ENCODE measurements at regions of chr11 and their contacts with region 1.

Region 1: DNA sequence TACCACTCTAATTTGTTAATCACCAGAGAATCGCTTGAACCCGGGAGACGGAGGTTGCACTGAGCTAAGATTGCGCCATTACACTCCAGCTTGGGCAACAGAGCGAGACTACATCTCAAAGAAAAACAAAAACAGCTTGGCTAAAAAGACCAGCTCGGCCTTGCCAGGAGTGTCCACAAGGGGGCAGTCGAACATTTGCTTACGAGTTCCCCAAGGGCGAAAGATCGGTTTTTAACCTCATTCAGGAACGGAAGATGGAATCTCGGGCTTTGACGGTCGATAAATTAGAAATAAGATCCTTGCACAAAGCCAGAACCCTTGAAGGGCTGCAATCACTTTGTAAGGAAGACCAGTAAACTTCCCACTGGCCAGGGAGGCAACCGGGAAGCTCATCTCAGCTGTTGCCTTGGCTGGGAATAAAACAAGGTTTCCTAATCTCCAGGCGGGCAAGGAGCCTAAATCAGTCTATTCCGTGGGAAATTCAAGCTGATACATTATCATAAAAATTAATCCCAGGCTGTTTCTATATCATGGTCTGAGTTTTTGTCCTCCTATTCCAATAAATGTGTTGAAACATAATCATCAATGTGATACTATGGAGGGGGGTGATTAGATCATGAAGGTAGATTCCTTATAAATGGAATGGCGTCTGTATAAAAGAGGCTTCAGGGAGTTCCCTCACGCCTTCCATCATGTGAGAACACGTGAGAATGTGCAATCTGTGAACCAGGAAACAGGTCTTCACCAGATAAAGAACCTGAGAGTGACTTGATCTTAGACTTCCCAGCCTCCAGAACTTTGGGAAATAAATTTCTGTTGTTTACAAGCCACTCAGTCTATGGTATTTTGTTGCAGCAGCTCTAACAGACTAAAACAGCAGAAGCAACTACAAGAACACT is 14.9 kb upstream of the SLC29A2 start:
- DNase-seq: peak; percentile 92
- ATAC-seq: peak; percentile 80
- H3K4me3 Mint-ChIP-seq: peak overlapping the region; percentile 47
- H3K27ac Mint-ChIP-seq: peak overlapping the region; percentile 15
- H3K4me1 Mint-ChIP-seq: peaks cover 7% of the 10 kb centered on the region
- H3K27me3 Mint-ChIP-seq: no peaks in the 10 kb centered on the region

Region 2: DNA sequence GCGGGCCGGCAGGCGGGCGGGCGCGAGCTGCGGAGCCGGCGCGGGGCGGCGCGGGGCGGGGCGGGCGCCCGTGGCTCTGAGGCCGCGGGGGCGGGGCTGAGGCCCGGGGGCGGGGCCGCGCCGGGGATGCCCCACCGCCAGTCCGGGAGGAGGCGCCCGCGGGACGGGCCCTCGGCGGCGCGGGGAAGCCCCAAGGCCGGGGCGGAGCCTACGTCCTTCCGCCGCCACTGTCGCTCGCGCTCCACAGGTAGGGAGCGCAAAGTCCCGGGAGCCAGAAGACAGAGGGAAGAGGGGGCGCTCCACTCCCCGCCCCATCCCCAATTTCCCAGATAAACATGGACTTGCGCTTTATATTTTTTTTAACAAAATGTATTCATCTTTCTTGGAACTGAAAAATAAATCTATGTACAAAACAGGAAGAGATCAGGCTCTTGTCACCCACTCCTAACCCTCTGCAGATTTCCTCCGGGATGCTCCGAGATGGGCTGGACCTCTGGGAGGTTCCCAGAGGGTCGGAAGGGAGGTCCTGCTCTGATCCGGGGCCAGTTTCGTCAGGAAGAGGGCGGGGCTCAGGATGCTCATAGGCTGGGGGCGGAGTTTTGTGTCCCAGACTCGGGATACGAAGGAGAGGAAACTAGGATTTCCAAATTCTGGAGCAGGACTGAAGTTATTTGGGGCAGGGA is 1583.1 kb before region 1 on chr11 and contains the start of gene MAP4K2:
- CTCF ChIA-PET with region 1: no interaction called
- POLR2A ChIA-PET with region 1: no interaction called
- intact Hi-C with region 1: no loop called
- DNase-seq: peak; percentile 92
- ATAC-seq: peak; percentile 93
- H3K4me3 Mint-ChIP-seq: peak within 1 kb of the TSS; percentile 75
- H3K27ac Mint-ChIP-seq: peak within 1 kb of the TSS; percentile 90
- H3K4me1 Mint-ChIP-seq: peaks cover 27% of the 10 kb centered on the region
- H3K27me3 Mint-ChIP-seq: no peaks in the 10 kb centered on the region
- total RNA-seq, gene MAP4K2: 54.0 to 57.3 TPM

Region 3: DNA sequence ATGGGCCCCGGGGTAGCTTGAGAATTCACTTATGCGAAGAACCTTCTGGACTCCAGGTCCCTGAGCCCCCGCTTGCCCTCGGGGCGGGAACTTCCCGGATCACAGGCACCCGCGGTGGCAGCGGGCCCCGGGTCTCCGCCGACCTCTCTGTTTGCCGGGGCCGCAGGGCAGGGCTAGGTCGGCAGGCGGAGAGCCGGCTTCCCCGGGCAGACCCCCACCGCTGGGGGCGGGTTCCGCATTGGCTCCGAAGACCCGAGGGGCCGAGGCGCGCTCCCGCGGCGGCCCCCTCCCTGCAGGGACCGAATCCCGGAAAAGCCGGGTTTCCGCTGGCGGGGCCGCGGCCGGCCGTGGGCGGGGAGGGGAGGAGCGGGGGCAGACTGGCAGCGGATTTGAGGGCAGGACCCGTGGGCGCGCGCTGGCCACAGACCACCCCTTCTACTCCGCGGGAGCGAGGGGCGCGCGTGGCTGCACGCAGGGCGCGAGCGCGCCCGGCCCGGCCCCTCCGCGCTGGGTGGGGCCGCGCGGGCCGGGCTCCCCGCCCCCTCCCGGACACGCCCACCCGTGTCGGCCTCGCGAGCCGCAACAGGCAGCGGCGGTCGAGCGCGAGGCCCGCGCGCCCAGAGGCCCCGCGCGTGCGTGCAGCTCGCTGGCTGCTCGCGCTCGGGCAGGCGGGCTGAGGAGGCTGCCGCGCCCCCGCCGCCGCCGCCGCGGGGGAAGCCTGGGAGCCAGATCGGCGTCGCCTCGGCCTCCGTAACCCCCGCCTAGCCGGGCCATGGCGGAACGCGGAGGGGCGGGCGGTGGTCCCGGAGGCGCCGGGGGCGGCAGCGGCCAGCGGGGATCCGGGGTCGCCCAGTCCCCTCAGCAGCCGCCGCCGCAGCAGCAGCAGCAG is 316.5 kb before region 1 on chr11 and contains the start of gene PACS1:
- CTCF ChIA-PET with region 1: no interaction called
- POLR2A ChIA-PET with region 1: no interaction called
- intact Hi-C with region 1: no loop called
- DNase-seq: peak; percentile 83
- ATAC-seq: peak; percentile 48
- H3K4me3 Mint-ChIP-seq: peak within 1 kb of the TSS; percentile 98
- H3K27ac Mint-ChIP-seq: peak within 1 kb of the TSS; percentile 99
- H3K4me1 Mint-ChIP-seq: peaks cover 66% of the 10 kb centered on the region
- H3K27me3 Mint-ChIP-seq: no peaks in the 10 kb centered on the region
- total RNA-seq, gene PACS1: 76.6 to 90.7 TPM

Region 4: GRCh38 chr11:66344550-66345315 is 41.7 kb before region 1 on chr11 and contains the start of gene BRMS1:
- CTCF ChIA-PET with region 1: interaction called, 14 read pairs
- POLR2A ChIA-PET with region 1: no interaction called
- intact Hi-C with region 1: no loop called
- DNase-seq: peak; percentile 98
- ATAC-seq: peak; percentile 80
- H3K4me3 Mint-ChIP-seq: peak within 1 kb of the TSS; percentile 93
- H3K27ac Mint-ChIP-seq: peak within 1 kb of the TSS; percentile 90
- H3K4me1 Mint-ChIP-seq: peaks cover 45% of the 10 kb centered on the region
- H3K27me3 Mint-ChIP-seq: peaks cover 3% of the 10 kb centered on the region
- total RNA-seq, gene BRMS1: 29.2 to 30.2 TPM

Region 5: GRCh38 chr11:66363805-66364535 is 22.4 kb before region 1 on chr11:
- CTCF ChIA-PET with region 1: interaction called, 19 read pairs
- POLR2A ChIA-PET with region 1: no interaction called
- intact Hi-C with region 1: no loop called
- DNase-seq: peak; percentile 88
- ATAC-seq: peak; percentile 82
- H3K4me3 Mint-ChIP-seq: no peak overlapping the region
- H3K27ac Mint-ChIP-seq: no peak overlapping the region
- H3K4me1 Mint-ChIP-seq: no peaks in the 10 kb centered on the region
- H3K27me3 Mint-ChIP-seq: no peaks in the 10 kb centered on the region

Region 6: DNA sequence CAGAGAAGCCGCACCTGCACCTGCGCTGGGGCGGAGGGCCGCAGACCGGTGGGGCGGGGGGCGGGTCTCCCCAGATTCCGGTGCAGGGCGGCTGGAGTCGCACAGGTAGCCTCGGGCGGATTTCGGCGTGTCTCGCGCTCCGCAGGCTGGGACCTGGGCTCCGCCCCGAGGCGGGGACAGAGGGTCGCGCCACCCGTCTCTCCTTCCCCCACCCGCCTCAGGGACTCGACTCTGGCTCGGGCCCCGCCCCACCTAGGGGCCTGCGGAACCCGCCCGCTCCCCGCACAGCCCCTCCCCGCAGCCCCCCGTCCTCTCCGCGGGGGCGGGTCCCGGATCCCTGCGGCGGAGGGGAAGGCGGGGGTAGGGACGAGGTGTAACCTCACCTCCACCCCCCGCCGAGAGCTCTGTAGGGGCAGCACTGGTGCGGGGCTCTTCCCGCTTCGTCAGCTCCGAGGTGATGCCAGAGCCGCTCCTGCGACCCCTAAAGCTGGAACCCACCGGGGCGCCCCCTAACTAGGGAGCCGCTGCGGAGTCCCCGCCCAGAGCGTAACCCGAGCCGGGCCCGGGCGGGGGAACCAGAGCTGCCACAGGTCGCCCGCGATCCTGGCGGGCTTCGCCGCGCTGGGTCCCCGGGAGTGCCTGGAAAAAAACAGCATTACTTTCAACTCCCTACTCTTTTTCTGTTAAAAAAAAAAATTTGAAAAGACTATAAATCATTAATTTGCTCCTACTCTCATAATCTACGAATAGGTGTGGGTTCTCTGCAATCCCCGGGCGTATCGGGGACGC is 14.6 kb before region 1 on chr11 and contains the start of gene SLC29A2:
- CTCF ChIA-PET with region 1: interaction called, 20 read pairs
- POLR2A ChIA-PET with region 1: interaction called, 12 read pairs
- intact Hi-C with region 1: loop called in 1 of 2 experiments (anchors 2 kb)
- DNase-seq: peak; percentile 92
- ATAC-seq: peak; percentile 87
- H3K4me3 Mint-ChIP-seq: peak within 1 kb of the TSS; percentile 91
- H3K27ac Mint-ChIP-seq: peak within 1 kb of the TSS; percentile 91
- H3K4me1 Mint-ChIP-seq: peaks cover 19% of the 10 kb centered on the region
- H3K27me3 Mint-ChIP-seq: no peaks in the 10 kb centered on the region
- total RNA-seq, gene SLC29A2: 13.6 to 14.4 TPM

Region 7: DNA sequence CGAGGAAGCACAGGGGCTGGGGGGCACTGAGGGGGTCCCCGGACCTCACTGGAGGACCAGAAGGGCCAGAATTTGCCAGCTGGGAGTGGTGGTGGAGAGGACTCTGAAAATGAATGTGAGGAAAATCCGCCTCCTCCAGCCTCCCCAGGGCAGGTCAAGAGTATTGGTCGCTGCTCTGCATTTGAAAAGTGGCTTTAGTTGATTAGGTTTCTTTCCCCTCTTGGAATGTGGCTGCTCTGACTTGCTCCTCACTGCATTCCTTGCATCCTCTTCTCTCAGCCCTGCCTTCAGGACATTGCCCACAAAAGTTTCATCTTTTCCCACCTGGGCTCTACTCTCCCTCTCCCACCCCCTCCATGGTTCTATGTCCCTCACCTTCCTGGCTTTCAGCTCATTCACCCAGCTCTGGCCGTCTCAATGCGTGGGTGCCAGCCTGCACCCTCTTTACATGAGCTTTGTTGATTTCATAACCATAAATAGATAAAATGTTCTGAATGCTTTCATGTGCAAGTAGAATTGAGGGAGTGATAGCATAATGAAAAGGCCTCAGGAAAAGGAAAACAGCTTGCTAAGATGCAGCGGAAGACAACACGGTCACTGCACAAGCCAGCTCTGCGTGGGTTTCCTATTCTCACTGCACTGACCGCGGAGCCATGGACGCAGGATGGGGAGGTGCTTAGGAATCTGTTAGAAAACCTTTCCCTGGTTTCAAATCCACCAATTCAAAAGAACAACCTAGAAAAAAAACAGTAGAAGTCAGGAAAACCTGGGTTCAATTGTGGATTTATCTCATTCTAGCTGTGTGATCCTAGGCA is 27.9 kb after region 1 on chr11:
- CTCF ChIA-PET with region 1: interaction called, 10 read pairs
- POLR2A ChIA-PET with region 1: no interaction called
- intact Hi-C with region 1: no loop called
- DNase-seq: no peak
- ATAC-seq: no peak
- H3K4me3 Mint-ChIP-seq: no peak overlapping the region
- H3K27ac Mint-ChIP-seq: no peak overlapping the region
- H3K4me1 Mint-ChIP-seq: peaks cover 30% of the 10 kb centered on the region
- H3K27me3 Mint-ChIP-seq: peaks cover 55% of the 10 kb centered on the region

Region 8: GRCh38 chr11:66429983-66430602 is 43.7 kb after region 1 on chr11:
- CTCF ChIA-PET with region 1: interaction called, 15 read pairs
- POLR2A ChIA-PET with region 1: no interaction called
- intact Hi-C with region 1: loop called in 1 of 2 experiments (anchors 5 kb)
- DNase-seq: peak; percentile 91
- ATAC-seq: peak; percentile 97
- H3K4me3 Mint-ChIP-seq: no peak overlapping the region
- H3K27ac Mint-ChIP-seq: no peak overlapping the region
- H3K4me1 Mint-ChIP-seq: no peaks in the 10 kb centered on the region
- H3K27me3 Mint-ChIP-seq: no peaks in the 10 kb centered on the region

Measured in activated CD4-positive, alpha-beta T cell treated with anti-CD3 and anti-CD28 coated beads for 36 hours (primary cell).